Psoas muscle (tissue), 8 donors: ENCODE measurements at regions of chr14 and their contacts with region 1.

Region 1: DNA sequence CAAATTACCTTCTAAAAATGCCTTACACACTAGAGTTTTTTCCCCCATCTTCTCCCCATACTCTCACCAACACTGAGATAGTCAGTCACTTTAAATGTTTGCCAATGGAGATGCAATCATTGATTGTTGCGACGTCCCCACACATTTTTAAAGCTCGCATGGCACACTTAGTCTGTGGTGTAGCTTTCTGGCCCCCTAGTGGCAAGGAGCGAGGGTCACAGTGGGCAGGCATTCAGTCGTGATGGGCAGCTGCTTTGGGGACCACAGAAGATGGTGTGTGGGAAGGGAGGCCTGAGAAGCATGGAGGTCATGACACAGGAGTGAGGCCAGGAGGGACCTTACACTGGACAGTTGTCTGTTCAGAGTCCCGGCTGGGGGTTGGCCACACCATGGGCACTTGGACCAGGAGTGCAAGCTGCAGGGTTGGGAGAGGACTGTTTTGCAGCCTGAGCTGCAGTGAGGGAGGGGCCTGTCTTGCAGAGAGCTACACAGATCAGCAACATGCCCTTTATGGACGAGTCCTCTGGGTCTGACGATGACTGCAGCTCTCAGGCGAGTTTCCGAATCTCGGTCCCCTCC is 28.7 kb downstream of the PIGH start:
- DNase-seq: peak; percentile 61 to 79
- ATAC-seq: peak; percentile 68 to 84 (median 74)
- H3K4me3 ChIP-seq: no peak overlapping the region
- H3K27ac ChIP-seq: no peak overlapping the region
- H3K4me1 ChIP-seq: peaks cover 11% of the 10 kb centered on the region
- H3K27me3 ChIP-seq: no peaks in the 10 kb centered on the region
- CTCF ChIP-seq: peak; percentile 82

Region 2: GRCh38 chr14:67426983-67427606 is 144.3 kb before region 1 on chr14:
- intact Hi-C with region 1: loop called (anchors 2 kb)
- DNase-seq: peak; percentile 65 to 85
- ATAC-seq: peak; percentile 88 to 94 (median 88)
- H3K4me3 ChIP-seq: no peak overlapping the region
- H3K27ac ChIP-seq: no peak overlapping the region
- H3K4me1 ChIP-seq: peaks cover 19% of the 10 kb centered on the region
- H3K27me3 ChIP-seq: no peaks in the 10 kb centered on the region
- CTCF ChIP-seq: peak; percentile 86

Region 3: GRCh38 chr14:67526676-67527459 is 44.5 kb before region 1 on chr14:
- intact Hi-C with region 1: loop called (anchors 1 kb)
- DNase-seq: peak in 1 of 2 donors; percentile 55
- ATAC-seq: peak; percentile 82 to 95 (median 88)
- H3K4me3 ChIP-seq: no peak overlapping the region
- H3K27ac ChIP-seq: no peak overlapping the region
- H3K4me1 ChIP-seq: no peaks in the 10 kb centered on the region
- H3K27me3 ChIP-seq: peaks cover 0 to 6% (median 0%) of the 10 kb centered on the region in 3 donors
- CTCF ChIP-seq: peak; percentile 71

Region 4: DNA sequence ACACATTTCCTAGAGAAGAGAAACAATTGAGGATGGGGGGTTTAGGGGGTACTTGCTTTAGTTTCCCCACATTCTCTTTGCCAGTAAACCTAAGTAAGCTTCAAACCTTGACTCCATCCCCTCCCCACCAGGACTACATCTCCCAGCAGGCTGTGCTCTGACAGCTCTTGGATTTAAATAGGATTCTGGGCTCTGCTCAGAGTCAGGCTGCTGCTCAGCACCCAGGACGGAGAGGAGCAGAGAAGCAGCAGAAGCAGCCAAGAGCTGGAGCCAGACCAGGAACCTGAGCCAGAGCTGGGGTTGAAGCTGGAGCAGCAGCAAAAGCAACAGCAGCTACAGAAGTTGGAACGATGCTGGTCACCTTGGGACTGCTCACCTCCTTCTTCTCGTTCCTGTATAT is 150.9 kb after region 1 on chr14:
- intact Hi-C with region 1: no loop called
- DNase-seq: peak; percentile 55 to 79
- ATAC-seq: peak; percentile 83 to 89 (median 86)
- H3K4me3 ChIP-seq: no peak overlapping the region
- H3K27ac ChIP-seq: no peak overlapping the region
- H3K4me1 ChIP-seq: peaks cover 3% of the 10 kb centered on the region
- H3K27me3 ChIP-seq: no peaks in the 10 kb centered on the region
- CTCF ChIP-seq: no peak